ENCODE measurements at regions of chr1 and their contacts with region 1.

Region 1: DNA sequence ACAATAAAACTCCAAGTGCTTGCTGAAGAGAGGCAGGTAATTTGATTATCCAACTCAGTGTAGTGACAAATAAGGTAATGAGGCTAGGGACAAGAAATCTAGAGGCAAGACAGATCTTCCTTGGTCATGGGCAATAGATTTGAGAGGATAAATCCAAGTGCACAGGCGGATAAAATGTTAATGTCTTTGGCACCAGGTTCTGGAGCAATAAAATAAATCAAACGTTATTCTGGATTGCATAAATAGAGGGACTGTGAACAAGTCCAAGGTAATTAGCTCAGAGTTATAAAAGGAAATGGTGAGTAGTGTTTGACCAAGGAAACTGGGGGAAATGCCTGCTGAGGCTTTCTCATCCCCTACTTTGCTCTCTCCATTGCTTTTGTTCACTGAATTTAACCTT is 329.3 kb upstream of the PROX1 start:
- DNase-seq: no peak
- H3K4me3 ChIP-seq: no peak overlapping the region
- H3K27ac ChIP-seq: no peak overlapping the region
- H3K4me1 ChIP-seq: no peaks in the 10 kb centered on the region
- H3K27me3 ChIP-seq: no peaks in the 10 kb centered on the region
- CTCF ChIP-seq: no peak
- POLR2A ChIP-seq: no peak

Region 2: DNA sequence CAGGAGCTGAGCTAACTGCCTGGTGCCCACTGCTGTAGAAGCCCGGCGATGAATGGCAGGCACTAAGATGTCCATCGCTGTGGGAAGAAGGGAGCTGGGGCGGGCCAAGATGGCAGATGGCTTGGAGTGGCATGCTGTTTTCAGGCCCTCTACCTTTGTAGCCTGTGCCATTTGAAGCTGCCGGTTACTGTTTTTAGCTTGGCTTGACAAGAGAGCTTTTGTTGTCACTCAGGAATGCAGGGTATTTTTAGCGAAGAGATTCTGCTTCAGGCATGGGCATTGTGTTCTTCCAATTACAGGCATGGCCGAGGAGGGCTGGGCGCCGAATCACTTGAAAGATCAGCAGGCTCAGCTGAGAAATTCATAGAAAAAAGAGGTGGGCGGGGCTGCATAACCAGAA is 258.8 kb before region 1 on chr1:
- intact Hi-C with region 1: loop called (anchors 10 kb)
- DNase-seq: peak; percentile 80 to 82
- H3K4me3 ChIP-seq: no peak overlapping the region
- H3K27ac ChIP-seq: peak overlapping the region; percentile 20 to 70 (median 64)
- H3K4me1 ChIP-seq: peaks cover 5 to 8% of the 10 kb centered on the region in 2 donors
- H3K27me3 ChIP-seq: no peaks in the 10 kb centered on the region
- CTCF ChIP-seq: no peak
- POLR2A ChIP-seq: no peak

Region 3: DNA sequence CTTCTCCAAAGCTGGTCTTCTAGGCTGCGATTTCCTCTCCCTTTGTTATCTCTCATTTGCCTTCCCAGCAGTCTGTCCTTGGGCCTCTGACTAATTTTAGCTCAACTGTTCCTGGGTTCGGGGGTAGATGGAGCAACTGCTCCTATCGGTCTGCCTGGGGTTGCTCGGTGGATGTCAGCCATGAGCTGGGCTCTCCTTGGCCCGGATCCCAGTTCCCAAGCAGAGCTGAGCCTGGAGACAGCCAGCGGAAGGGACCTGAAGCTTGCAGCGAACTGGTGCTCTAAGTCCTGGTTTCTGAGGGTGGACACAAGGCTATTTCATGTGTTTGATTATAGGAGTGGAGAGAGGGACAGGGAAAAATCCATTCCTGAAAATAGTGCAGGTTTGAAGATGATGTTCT is 184.4 kb before region 1 on chr1:
- intact Hi-C with region 1: no loop called
- DNase-seq: peak; percentile 8 to 22
- H3K4me3 ChIP-seq: no peak overlapping the region
- H3K27ac ChIP-seq: no peak overlapping the region
- H3K4me1 ChIP-seq: no peaks in the 10 kb centered on the region
- H3K27me3 ChIP-seq: no peaks in the 10 kb centered on the region
- CTCF ChIP-seq: no peak
- POLR2A ChIP-seq: no peak

Region 4: GRCh38 chr1:213733705-213734104 is 75.2 kb after region 1 on chr1:
- intact Hi-C with region 1: no loop called
- DNase-seq: no peak
- H3K4me3 ChIP-seq: no peak overlapping the region
- H3K27ac ChIP-seq: no peak overlapping the region
- H3K4me1 ChIP-seq: no peaks in the 10 kb centered on the region
- H3K27me3 ChIP-seq: no peaks in the 10 kb centered on the region
- CTCF ChIP-seq: no peak
- POLR2A ChIP-seq: no peak

Region 5: GRCh38 chr1:213820362-213821149 is 162.1 kb after region 1 on chr1:
- intact Hi-C with region 1: no loop called
- DNase-seq: peak; percentile 33 to 49
- H3K4me3 ChIP-seq: no peak overlapping the region
- H3K27ac ChIP-seq: no peak overlapping the region
- H3K4me1 ChIP-seq: peaks cover 0 to 3% of the 10 kb centered on the region in 2 donors
- H3K27me3 ChIP-seq: no peaks in the 10 kb centered on the region
- CTCF ChIP-seq: no peak
- POLR2A ChIP-seq: no peak

Region 6: DNA sequence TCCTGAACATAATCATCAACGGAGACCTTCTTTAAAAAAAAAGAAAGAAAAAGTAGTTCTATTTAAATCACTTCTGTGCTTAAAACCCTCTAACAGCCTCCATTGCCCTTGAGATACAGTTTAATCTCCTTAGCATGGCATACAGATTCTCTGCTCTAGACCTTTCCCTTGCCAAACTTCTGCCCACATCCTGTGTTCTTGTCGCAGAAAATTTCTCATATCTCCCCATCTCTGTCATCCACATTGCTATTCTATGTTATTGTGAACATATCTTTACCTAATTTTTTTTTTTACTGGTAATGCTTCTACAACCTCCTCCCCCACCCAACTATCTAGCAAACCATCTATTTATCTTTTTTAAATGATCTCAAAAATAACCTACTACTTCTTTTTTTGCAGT is 193.7 kb after region 1 on chr1:
- intact Hi-C with region 1: no loop called
- DNase-seq: no peak
- H3K4me3 ChIP-seq: no peak overlapping the region
- H3K27ac ChIP-seq: no peak overlapping the region
- H3K4me1 ChIP-seq: no peaks in the 10 kb centered on the region
- H3K27me3 ChIP-seq: no peaks in the 10 kb centered on the region
- CTCF ChIP-seq: no peak
- POLR2A ChIP-seq: no peak